CD8-positive, alpha-beta T cell (primary cell): ENCODE measurements at regions of chrX and their contacts with region 1.

Region 1: GRCh38 chrX:50430917-50431575 is 39.6 kb downstream of the DGKK start:
- DNase-seq: peak in 1 of 9 experiments; percentile 4
- ATAC-seq: no peak
- H3K4me3 ChIP-seq: no peak overlapping the region
- H3K4me3 Mint-ChIP-seq: no peak overlapping the region
- H3K27ac ChIP-seq: no peak overlapping the region
- H3K27ac Mint-ChIP-seq: no peak overlapping the region
- H3K4me1 ChIP-seq: no peaks in the 10 kb centered on the region
- H3K4me1 Mint-ChIP-seq: no peaks in the 10 kb centered on the region
- H3K27me3 ChIP-seq: no peaks in the 10 kb centered on the region
- H3K27me3 Mint-ChIP-seq: no peaks in the 10 kb centered on the region
- CTCF ChIP-seq: no peak

Region 2: GRCh38 chrX:50450324-50450723 is 19.3 kb after region 1 on chrX:
- CTCF ChIA-PET with region 1: no interaction called
- POLR2A ChIA-PET with region 1: no interaction called
- intact Hi-C with region 1: loop called in 1 of 2 experiments (anchors 1 kb)
- DNase-seq: no peak
- ATAC-seq: no peak
- H3K4me3 ChIP-seq: no peak overlapping the region
- H3K4me3 Mint-ChIP-seq: no peak overlapping the region
- H3K27ac ChIP-seq: no peak overlapping the region
- H3K27ac Mint-ChIP-seq: no peak overlapping the region
- H3K4me1 ChIP-seq: no peaks in the 10 kb centered on the region
- H3K4me1 Mint-ChIP-seq: no peaks in the 10 kb centered on the region
- H3K27me3 ChIP-seq: no peaks in the 10 kb centered on the region
- H3K27me3 Mint-ChIP-seq: peaks cover 10% of the 10 kb centered on the region
- CTCF ChIP-seq: no peak

Region 3: DNA sequence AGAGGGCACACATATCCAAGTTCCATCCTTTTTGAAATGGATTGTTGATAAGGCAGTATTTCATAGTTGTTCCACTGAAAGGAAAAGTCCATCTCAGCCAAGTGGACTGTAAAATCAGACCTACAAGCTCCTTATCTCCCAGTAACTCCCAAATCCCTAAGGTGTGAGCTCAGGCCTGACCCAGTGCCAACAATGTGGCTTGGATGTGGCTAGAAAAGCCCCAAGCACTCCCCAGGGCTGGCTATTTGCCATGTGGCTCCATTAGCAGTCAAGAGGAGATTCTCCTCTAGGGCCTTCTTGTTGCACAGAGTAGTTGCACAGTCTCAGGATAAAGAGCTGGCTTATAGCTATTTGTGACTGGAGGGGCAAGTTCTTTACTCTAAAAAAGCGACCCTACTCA is 64.6 kb after region 1 on chrX:
- CTCF ChIA-PET with region 1: no interaction called
- POLR2A ChIA-PET with region 1: no interaction called
- intact Hi-C with region 1: no loop called
- DNase-seq: no peak
- ATAC-seq: no peak
- H3K4me3 ChIP-seq: no peak overlapping the region
- H3K4me3 Mint-ChIP-seq: no peak overlapping the region
- H3K27ac ChIP-seq: no peak overlapping the region
- H3K27ac Mint-ChIP-seq: no peak overlapping the region
- H3K4me1 ChIP-seq: no peaks in the 10 kb centered on the region
- H3K4me1 Mint-ChIP-seq: no peaks in the 10 kb centered on the region
- H3K27me3 ChIP-seq: no peaks in the 10 kb centered on the region
- H3K27me3 Mint-ChIP-seq: peaks cover 15% of the 10 kb centered on the region
- CTCF ChIP-seq: no peak